Prostate gland (tissue), 2 donors: ENCODE measurements at regions of chr2 and their contacts with region 1.

Region 1: GRCh38 chr2:182186132-182186735 is 200.6 kb downstream of the PPP1R1C start:
- DNase-seq: no peak
- H3K4me3 ChIP-seq: no peak overlapping the region
- H3K27ac ChIP-seq: no peak overlapping the region
- H3K4me1 ChIP-seq: no peaks in the 10 kb centered on the region
- H3K27me3 ChIP-seq: no peaks in the 10 kb centered on the region
- CTCF ChIP-seq: peak; percentile 76 to 86 (median 83)
- POLR2A ChIP-seq: no peak

Region 2: GRCh38 chr2:182650704-182651103 is 464.5 kb after region 1 on chr2:
- intact Hi-C with region 1: loop called (anchors 2 kb)
- DNase-seq: no peak
- H3K4me3 ChIP-seq: no peak overlapping the region
- H3K27ac ChIP-seq: no peak overlapping the region
- H3K4me1 ChIP-seq: no peaks in the 10 kb centered on the region
- H3K27me3 ChIP-seq: no peaks in the 10 kb centered on the region
- CTCF ChIP-seq: peak; percentile 10 to 60 (median 54)
- POLR2A ChIP-seq: no peak